A549 (cell line): ENCODE measurements at regions of chr16 and their contacts with region 1.

Region 1: DNA sequence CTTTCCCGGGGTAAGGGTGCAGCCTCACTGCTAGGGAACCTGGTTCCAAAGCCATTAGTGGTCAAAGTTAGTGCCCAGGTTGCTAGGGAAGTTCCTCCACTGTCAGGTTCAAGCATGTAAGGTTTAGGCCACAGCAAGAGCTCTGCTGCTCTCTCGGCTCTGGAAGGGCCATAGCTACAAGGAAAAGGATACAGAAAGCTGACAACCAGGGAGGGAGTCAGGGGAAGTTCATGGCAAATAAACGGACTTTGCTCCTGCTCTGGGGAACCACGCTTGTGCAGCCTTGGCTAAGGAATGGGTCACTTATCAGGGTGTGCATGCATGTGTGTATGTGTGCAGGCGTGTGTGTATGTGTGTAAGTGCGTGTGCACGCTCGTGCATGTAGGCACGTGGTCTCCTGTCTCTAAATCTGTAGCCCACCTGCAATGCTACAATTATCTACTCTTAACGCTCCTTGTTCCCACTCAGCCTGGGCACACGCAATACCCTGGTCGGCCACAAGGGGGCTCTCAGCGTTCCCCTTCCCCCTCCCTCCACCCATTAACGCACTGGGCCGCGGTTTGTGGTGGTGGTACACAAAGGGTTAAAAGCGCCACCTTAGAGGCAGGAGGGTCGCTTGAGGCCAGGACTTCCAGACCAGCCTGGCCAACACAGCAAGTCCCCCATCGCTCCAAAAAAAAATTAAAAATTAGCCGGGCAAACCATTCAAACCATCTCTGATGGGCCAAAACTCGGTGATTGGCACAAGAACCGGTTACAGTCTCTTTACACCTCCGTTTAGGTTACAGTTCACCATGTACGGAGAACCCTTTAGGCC is 48.4 kb upstream of the KDM8 start:
- DNase-seq: peak; percentile 31 to 60
- ATAC-seq: peak; percentile 68 to 95; a peak in 4 of 6 replicates
- H3K4me3 ChIP-seq: peak overlapping the region; percentile 17; the same call in 1 of the 3 replicates
- H3K27ac ChIP-seq: no peak overlapping the region
- H3K4me1 ChIP-seq: no peaks in the 10 kb centered on the region
- CTCF ChIP-seq: peak; percentile 84
- EP300 ChIP-seq: no peak
- POLR2A ChIP-seq: no peak
- RAD21 ChIP-seq: peak; percentile 71 to 72; a peak in 4 of 5 replicates

Region 2: DNA sequence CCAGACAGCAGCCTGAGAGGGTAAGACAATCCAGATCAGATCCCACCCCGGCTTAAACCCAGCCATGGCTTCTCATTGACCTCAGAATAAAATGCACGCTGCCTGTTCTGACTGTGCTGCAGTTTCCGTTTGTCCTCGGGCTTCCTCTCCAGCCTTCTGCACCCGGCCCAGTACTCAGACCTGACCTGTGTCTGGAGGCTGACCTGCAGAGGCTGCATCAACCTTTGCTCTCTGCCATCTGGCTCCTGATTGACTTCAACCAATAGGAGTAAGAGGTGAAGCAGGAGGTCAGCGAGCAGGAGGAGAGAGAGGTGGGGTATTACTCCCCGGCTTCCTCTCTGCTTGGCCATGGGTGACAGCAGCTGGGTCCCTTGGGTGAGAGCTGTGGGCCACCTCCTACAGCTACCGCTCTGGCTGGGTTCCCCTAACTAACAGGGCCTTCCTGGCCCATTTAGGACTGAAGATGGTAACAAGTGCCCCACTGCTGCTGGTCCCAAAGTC is 41.5 kb before region 1 on chr16:
- CTCF ChIA-PET with region 1: no interaction called
- POLR2A ChIA-PET with region 1: no interaction called
- DNase-seq: no peak
- ATAC-seq: no peak
- H3K4me3 ChIP-seq: no peak overlapping the region
- H3K27ac ChIP-seq: no peak overlapping the region
- H3K4me1 ChIP-seq: 0 out of 3 replicates have a peak, but pooled peaks cover 3% of the 10 kb centered on the region
- CTCF ChIP-seq: no peak
- EP300 ChIP-seq: no peak
- POLR2A ChIP-seq: no peak
- RAD21 ChIP-seq: no peak

Region 3: GRCh38 chr16:27169511-27170071 is 14.7 kb after region 1 on chr16:
- CTCF ChIA-PET with region 1: interaction called, 83 read pairs
- POLR2A ChIA-PET with region 1: no interaction called
- DNase-seq: peak in 1 of 2 experiments; percentile 68
- ATAC-seq: peak; percentile 86 to 89; a peak in 5 of 6 replicates
- H3K4me3 ChIP-seq: no peak overlapping the region
- H3K27ac ChIP-seq: no peak overlapping the region
- H3K4me1 ChIP-seq: peaks cover 2% of the 10 kb centered on the region
- CTCF ChIP-seq: peak; percentile 22; the same call in 1 of the 3 replicates
- EP300 ChIP-seq: no peak
- POLR2A ChIP-seq: no peak
- RAD21 ChIP-seq: peak in 1 of 2 experiments; percentile 25; a peak in 1 of 5 replicates

Region 4: DNA sequence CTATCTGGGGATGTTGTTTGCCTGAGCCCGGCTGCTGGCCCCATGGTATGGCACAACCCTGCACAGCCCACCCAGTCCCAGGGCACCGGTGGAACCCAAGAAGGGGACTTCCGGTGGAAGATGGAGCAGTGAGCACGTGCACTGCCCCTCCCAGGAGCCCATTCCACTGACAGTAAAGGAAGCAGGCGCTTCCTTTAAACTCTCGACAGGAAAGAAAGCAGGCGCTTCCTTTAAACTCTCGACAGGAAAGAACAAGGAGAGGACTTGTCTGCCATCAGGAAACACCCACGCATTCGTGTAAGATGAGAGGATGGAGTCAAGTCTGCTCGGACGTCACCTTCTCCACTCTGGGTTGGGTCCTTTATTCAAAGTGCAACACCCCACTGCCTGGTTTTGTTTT is 300.8 kb after region 1 on chr16:
- CTCF ChIA-PET with region 1: interaction called, 15 read pairs
- POLR2A ChIA-PET with region 1: no interaction called
- DNase-seq: no peak
- ATAC-seq: no peak
- H3K4me3 ChIP-seq: no peak overlapping the region
- H3K27ac ChIP-seq: no peak overlapping the region
- H3K4me1 ChIP-seq: no peaks in the 10 kb centered on the region
- CTCF ChIP-seq: no peak
- EP300 ChIP-seq: no peak
- POLR2A ChIP-seq: no peak
- RAD21 ChIP-seq: no peak